Dorsolateral prefrontal cortex (tissue), 120 donors: ENCODE measurements at regions of chr5 and their contacts with region 1.

Region 1: GRCh38 chr5:43389679-43390329 is 22.4 kb downstream of the CCL28 start:
- DNase-seq: peak in 5 of 10 donors; percentile 6 to 62 (median 36)
- H3K4me3 ChIP-seq: peak overlapping the region in 3 of 59 donors; percentile 8 to 32 (median 13)
- H3K27ac ChIP-seq: peak overlapping the region in 2 of 59 donors; percentile 17 to 21
- H3K27me3 ChIP-seq: no peaks in the 10 kb centered on the region
- CTCF ChIP-seq: peak; percentile 80 to 99 (median 90)

Region 2: DNA sequence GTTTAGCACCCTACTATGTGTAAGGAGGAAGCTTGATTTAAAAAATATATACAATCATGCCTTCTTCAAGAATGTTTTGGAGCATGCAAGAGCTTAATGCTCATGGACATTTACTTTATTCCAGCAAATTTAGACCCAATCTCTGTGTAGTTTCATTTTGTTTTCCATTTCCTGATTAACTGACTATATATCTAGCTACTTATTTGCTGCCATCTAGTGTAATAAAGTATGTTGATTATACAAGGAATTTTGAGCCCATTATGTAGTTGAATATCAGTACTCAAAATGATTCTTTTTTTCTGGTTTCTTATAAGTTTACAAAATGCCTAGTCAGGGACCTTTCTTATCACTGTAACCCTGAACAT is 733.2 kb before region 1 on chr5:
- intact Hi-C with region 1: no loop called
- DNase-seq: no peak
- H3K4me3 ChIP-seq: peak overlapping the region in 4 of 59 donors; percentile 16 to 24 (median 19)
- H3K27ac ChIP-seq: no peak overlapping the region
- H3K27me3 ChIP-seq: no peaks in the 10 kb centered on the region
- CTCF ChIP-seq: peak in 39 of 56 donors; percentile 10 to 63 (median 28)

Region 3: DNA sequence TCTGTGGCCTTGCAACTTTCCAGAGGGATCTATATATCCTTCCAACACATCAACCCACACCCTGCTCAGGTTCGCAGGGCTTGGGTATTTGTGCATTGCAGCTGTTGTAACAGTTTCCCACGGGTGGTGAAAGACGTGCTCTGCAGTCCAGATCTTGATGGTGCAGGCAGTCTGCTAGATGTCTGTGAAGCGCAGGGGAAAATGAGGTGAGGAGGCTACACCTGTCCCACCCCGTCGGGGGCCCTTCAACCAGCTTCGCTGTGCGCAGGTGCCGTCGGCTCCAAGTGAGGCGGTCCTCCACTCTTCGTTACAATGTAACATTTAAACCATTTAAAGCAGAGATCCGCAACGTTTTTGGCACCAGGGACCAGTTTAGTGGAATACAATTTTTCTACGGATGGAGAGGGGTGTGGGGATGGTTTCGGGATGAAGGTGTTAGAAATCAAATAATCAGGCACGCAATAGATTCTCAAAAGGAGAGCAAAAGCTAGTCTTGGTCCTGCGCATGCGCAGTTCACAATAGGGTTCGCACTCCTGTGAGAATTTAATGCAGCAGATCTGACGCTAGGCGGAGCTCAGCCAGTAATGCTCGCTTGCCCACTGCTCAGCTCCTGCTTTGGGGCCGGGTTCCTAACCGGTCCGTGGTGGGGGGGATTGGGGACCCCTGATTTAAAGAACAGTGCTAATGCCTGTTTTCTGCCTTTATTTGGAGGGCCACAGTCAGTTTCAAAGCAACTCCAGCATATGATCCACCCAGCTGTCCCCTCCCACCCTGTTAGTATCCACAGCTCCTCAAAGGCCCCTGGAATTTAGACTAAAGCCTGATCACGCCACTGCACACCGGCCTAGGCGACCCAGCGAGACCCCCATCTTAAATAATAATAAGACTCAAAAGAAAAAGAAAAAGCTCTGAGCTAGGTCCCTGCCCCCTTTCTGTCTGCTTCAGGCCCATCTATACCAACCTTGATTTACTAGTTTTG is 481.0 kb before region 1 on chr5:
- intact Hi-C with region 1: loop called (anchors 10 kb)
- DNase-seq: peak; percentile 71 to 91 (median 89)
- H3K4me3 ChIP-seq: peak overlapping the region; percentile 40 to 94 (median 65)
- H3K27ac ChIP-seq: peak overlapping the region in 10 of 59 donors; percentile 2 to 70 (median 27)
- H3K27me3 ChIP-seq: no peaks in the 10 kb centered on the region
- CTCF ChIP-seq: peak; percentile 58 to 94 (median 86)

Region 4: GRCh38 chr5:43105369-43106289 is 284.2 kb before region 1 on chr5:
- intact Hi-C with region 1: loop called in 1 of 2 experiments (anchors 5 kb)
- DNase-seq: peak; percentile 77 to 87 (median 84)
- H3K4me3 ChIP-seq: peak overlapping the region; percentile 8 to 74 (median 55)
- H3K27ac ChIP-seq: peak overlapping the region in 55 of 59 donors; percentile 2 to 89 (median 69)
- H3K27me3 ChIP-seq: no peaks in the 10 kb centered on the region
- CTCF ChIP-seq: peak; percentile 85 to 100 (median 98)

Region 5: DNA sequence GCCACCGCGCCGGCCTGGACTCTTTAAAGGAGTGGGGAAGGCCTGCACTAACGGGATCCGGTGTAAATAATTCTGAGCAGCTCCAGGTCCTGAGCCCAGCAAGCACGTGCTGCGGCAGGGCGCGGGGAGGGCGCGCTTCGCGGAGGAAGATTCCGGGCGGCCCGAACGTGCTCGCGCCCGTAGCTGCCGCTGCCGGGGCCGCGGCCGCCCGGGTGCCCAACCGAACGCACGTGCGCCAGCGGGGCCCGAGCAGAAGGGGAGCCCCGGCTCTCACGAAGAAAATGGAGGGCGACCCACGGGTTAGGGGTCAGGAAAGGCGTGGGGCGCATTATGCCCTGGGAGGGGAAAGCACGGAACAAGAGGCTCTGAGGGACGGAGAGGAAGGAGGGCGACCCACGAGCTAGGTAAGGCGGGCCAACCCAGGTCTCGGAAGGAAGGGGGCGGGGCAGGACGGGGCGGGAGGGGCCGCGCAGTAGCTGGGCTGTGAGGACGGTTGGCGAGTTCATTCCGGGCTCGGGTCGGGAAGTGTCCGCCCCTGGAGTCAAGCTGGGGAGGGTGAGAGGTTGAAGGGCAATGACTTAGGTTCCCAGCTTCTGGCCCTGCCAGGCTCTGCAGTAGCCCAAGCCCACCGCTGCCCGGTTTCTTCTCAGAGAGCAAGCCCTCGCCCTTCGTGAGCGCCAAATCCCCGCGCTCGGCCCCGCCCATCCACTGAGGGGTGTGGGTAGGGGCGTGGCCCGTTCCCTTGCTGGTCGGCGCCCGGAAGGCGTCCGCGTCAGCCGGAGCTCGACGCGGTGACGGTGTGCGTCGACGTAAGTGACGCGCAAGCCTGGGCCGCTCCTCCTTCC is 268.9 kb before region 1 on chr5 and contains the start of gene ZNF131:
- intact Hi-C with region 1: loop called in 1 of 2 experiments (anchors 10 kb)
- DNase-seq: peak; percentile 90 to 98 (median 95)
- H3K4me3 ChIP-seq: peak within 1 kb of the TSS; percentile 62 to 99 (median 91)
- H3K27ac ChIP-seq: peak within 1 kb of the TSS; percentile 77 to 100 (median 97)
- H3K27me3 ChIP-seq: no peaks in the 10 kb centered on the region
- CTCF ChIP-seq: peak in 9 of 56 donors; percentile 5 to 35 (median 21)
- total RNA-seq, gene ZNF131: 29.1 to 65.2 (median 49.2) TPM